ENCODE measurements at regions of chr11 and their contacts with region 1.

Region 1: DNA sequence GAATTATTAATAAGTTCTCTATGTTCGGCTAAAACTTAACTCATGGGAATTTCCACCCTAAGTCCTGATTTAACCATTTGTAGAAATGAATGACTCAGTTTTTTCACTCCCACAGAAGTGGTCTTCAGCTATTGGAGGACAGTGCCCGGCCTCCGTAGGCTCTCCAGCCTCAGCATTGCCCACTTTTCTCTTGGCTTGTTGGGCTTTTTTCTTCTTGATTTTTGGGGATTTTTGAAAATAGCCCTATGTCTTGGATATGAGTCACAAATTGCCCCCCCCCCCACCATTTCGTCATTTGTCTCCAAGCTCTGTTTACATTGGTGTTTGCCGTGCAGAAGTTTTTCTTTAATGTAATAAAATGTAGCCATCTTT is 66.7 kb downstream of the PACS1 start:
- DNase-seq: no peak
- ATAC-seq: no peak
- H3K4me3 ChIP-seq: no peak overlapping the region
- H3K4me3 Mint-ChIP-seq: no peak overlapping the region
- H3K27ac ChIP-seq: peak overlapping the region in 1 of 2 donors; percentile 57
- H3K27ac Mint-ChIP-seq: peak overlapping the region; percentile 65
- H3K4me1 ChIP-seq: peaks cover 44 to 50% of the 10 kb centered on the region in 2 donors
- H3K4me1 Mint-ChIP-seq: peaks cover 75% of the 10 kb centered on the region
- H3K27me3 ChIP-seq: no peaks in the 10 kb centered on the region
- H3K27me3 Mint-ChIP-seq: no peaks in the 10 kb centered on the region
- CTCF ChIP-seq: no peak

Region 2: DNA sequence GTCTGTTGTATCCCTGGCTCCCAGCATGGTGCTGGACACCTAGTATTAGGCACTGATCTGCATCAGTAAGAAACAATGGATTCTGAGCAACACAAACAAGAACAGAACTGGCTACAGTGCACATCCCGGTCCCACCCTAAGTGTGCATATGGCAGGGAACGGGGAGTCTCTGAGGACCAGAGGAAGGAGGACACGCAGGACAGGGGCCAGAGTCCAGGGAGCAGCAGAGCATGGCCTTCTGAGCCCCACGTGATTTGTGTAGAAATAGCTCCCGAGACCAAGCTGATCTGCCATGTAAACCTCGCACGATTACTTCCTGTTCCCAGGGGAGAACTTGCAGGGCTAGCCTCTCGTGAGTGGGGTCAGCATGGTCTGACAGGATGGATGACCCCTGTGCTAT is 315.6 kb before region 1 on chr11:
- CTCF ChIA-PET with region 1: no interaction called
- POLR2A ChIA-PET with region 1: no interaction called
- intact Hi-C with region 1: no loop called
- DNase-seq: no peak
- ATAC-seq: no peak
- H3K4me3 ChIP-seq: no peak overlapping the region
- H3K4me3 Mint-ChIP-seq: no peak overlapping the region
- H3K27ac ChIP-seq: no peak overlapping the region
- H3K27ac Mint-ChIP-seq: no peak overlapping the region
- H3K4me1 ChIP-seq: peaks cover 6 to 13% of the 10 kb centered on the region in 2 donors
- H3K4me1 Mint-ChIP-seq: peaks cover 9% of the 10 kb centered on the region
- H3K27me3 ChIP-seq: no peaks in the 10 kb centered on the region
- H3K27me3 Mint-ChIP-seq: no peaks in the 10 kb centered on the region
- CTCF ChIP-seq: no peak

Region 3: DNA sequence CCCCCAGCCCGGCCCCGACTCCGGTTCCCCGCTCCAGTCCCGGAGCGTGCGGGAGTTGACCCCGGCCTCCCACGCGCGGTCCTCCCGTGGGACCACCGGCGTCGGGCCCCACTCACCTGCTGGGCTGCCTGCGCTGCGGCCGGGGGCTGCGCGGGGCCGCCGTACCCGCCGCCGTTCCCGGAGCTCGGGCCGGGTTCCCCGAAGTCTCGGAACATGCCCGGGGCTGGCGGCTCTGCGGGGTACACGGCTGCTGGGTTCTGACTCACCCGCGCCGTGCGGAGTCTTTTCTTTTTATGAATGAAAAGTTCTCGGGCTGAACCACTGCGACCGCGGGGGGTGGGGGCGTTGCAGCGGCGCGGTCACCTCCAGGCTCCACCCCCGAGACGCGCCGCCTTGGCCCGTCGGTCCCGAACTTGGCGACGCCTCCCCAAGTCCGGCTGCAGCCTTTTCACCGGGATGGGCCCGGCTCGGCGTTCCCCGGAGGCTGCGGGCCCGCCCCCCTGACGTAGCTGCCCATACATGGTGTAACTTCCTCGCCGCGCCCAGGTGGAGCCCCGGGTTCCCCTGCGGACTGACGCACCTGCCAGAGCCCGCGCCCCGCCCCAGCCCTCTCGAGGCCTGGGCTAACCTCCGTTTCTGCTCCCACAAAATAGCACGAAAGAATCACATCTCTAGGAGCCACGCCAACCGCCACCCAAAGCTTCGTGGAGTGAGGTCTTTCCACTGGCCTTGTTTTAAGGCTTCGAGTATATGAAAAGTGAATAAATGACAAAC is 236.4 kb before region 1 on chr11 and contains the start of gene FOSL1:
- CTCF ChIA-PET with region 1: no interaction called
- POLR2A ChIA-PET with region 1: no interaction called
- intact Hi-C with region 1: no loop called
- DNase-seq: peak; percentile 96
- ATAC-seq: peak; percentile 95
- H3K4me3 ChIP-seq: peak within 1 kb of the TSS; percentile 2 to 64 (median 52)
- H3K4me3 Mint-ChIP-seq: peak within 1 kb of the TSS; percentile 83
- H3K27ac ChIP-seq: no peak within 1 kb of the TSS
- H3K27ac Mint-ChIP-seq: peak within 1 kb of the TSS; percentile 72
- H3K4me1 ChIP-seq: peaks cover 20% of the 10 kb centered on the region in 2 donors
- H3K4me1 Mint-ChIP-seq: peaks cover 10% of the 10 kb centered on the region
- H3K27me3 ChIP-seq: peaks cover 0 to 38% (median 12%) of the 10 kb centered on the region in 4 experiments
- H3K27me3 Mint-ChIP-seq: peaks cover 15% of the 10 kb centered on the region
- CTCF ChIP-seq: no peak
- total RNA-seq, gene FOSL1: not detected in 2 replicates

Region 4: DNA sequence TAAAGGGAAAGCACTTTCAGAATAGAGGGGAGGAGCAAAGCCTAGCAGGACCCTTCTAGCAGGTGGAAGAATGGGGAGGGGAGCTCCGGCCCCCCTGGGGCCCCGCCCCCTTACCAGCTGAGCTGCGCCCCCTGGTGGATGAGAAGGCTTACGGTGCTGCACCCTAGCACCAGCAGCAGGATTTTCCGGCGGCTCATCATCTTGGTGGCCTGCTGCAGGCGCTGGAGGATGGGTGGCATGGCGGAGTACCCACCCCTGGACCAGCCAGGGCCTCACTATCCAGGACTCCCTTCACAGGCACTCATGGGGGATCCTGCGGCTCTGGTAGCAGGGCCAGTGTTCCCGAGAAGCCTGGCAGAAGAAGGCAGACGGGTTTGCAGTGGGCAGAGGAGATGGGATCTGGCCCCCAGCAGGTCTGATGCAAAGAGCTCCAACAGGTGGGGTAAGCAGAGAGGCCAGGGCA is 91.5 kb before region 1 on chr11:
- CTCF ChIA-PET with region 1: interaction called, 35 read pairs
- POLR2A ChIA-PET with region 1: interaction called, 4 read pairs
- intact Hi-C with region 1: no loop called
- DNase-seq: peak; percentile 88
- ATAC-seq: peak; percentile 96
- H3K4me3 ChIP-seq: no peak overlapping the region
- H3K4me3 Mint-ChIP-seq: no peak overlapping the region
- H3K27ac ChIP-seq: no peak overlapping the region
- H3K27ac Mint-ChIP-seq: peak overlapping the region; percentile 7
- H3K4me1 ChIP-seq: peaks cover 10 to 15% of the 10 kb centered on the region in 2 donors
- H3K4me1 Mint-ChIP-seq: peaks cover 16% of the 10 kb centered on the region
- H3K27me3 ChIP-seq: peaks cover 0 to 35% (median 5%) of the 10 kb centered on the region in 4 experiments
- H3K27me3 Mint-ChIP-seq: peaks cover 12% of the 10 kb centered on the region
- CTCF ChIP-seq: peak; percentile 94

Region 5: GRCh38 chr11:66188580-66188979 is 51.8 kb after region 1 on chr11:
- CTCF ChIA-PET with region 1: no interaction called
- POLR2A ChIA-PET with region 1: no interaction called
- intact Hi-C with region 1: no loop called
- DNase-seq: no peak
- ATAC-seq: no peak
- H3K4me3 ChIP-seq: no peak overlapping the region
- H3K4me3 Mint-ChIP-seq: no peak overlapping the region
- H3K27ac ChIP-seq: no peak overlapping the region
- H3K27ac Mint-ChIP-seq: no peak overlapping the region
- H3K4me1 ChIP-seq: peaks cover 2 to 3% of the 10 kb centered on the region in 2 donors
- H3K4me1 Mint-ChIP-seq: peaks cover 29% of the 10 kb centered on the region
- H3K27me3 ChIP-seq: no peaks in the 10 kb centered on the region
- H3K27me3 Mint-ChIP-seq: no peaks in the 10 kb centered on the region
- CTCF ChIP-seq: no peak

Region 6: GRCh38 chr11:66251809-66252208 is 115.1 kb after region 1 on chr11:
- CTCF ChIA-PET with region 1: no interaction called
- POLR2A ChIA-PET with region 1: no interaction called
- intact Hi-C with region 1: no loop called
- DNase-seq: no peak
- ATAC-seq: no peak
- H3K4me3 ChIP-seq: no peak overlapping the region
- H3K4me3 Mint-ChIP-seq: no peak overlapping the region
- H3K27ac ChIP-seq: no peak overlapping the region
- H3K27ac Mint-ChIP-seq: no peak overlapping the region
- H3K4me1 ChIP-seq: peaks cover 5 to 6% of the 10 kb centered on the region in 2 donors
- H3K4me1 Mint-ChIP-seq: peaks cover 9% of the 10 kb centered on the region
- H3K27me3 ChIP-seq: no peaks in the 10 kb centered on the region
- H3K27me3 Mint-ChIP-seq: no peaks in the 10 kb centered on the region
- CTCF ChIP-seq: no peak